ENCODE measurements at regions of chr3 and their contacts with region 1.

Region 1: DNA sequence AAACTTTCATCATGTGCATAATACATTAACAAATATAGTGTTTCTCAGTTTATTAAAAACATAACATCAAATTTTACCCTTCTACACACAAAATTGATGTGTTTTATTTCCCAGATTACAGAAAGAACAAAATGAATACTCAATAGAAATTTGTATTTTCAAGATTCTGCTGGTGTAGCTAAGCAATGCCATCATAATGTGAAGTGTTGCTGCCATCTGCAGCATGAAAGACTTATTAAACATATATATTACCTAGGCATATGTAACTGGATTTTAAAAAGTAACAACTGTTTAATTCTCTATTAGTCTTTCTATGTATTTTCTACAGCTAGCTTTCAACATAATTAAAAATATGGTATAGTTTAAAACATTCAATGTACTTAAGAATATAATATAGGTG is 27.5 kb downstream of the PLSCR5 start:
- DNase-seq: peak in 1 of 2 donors; percentile 72
- ATAC-seq: peak in 2 of 3 donors; percentile 49 to 57
- H3K4me3 ChIP-seq: no peak overlapping the region
- H3K4me3 Mint-ChIP-seq: no peak overlapping the region
- H3K27ac ChIP-seq: no peak overlapping the region
- H3K27ac Mint-ChIP-seq: no peak overlapping the region
- H3K4me1 ChIP-seq: no peaks in the 10 kb centered on the region
- H3K4me1 Mint-ChIP-seq: no peaks in the 10 kb centered on the region
- H3K27me3 ChIP-seq: no peaks in the 10 kb centered on the region
- H3K27me3 Mint-ChIP-seq: peaks cover 0 to 5% of the 10 kb centered on the region in 2 donors
- CTCF ChIP-seq: peak; percentile 80

Region 2: DNA sequence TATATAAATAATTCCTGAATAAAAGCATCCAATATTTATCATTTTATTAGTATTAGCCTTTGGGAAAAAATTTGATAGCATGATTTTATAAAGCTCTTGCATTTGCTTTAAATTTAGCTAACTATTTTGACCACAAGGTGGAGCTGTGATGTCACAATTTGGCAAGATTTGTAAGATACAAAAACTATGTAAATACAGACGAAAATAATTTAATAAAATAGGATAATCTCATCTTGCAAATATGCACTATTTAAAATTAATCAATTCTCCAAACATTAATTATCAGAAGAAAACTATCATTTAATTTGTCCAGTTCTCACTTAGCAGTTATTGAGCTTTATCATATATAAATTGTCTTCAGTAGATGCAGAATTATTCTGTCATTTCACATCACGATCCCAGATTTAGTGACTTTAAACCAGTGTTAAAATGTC is 512.1 kb before region 1 on chr3:
- intact Hi-C with region 1: loop called (anchors 10 kb)
- DNase-seq: peak in 1 of 2 donors; percentile 27
- ATAC-seq: no peak
- H3K4me3 ChIP-seq: no peak overlapping the region
- H3K4me3 Mint-ChIP-seq: no peak overlapping the region
- H3K27ac ChIP-seq: no peak overlapping the region
- H3K27ac Mint-ChIP-seq: no peak overlapping the region
- H3K4me1 ChIP-seq: no peaks in the 10 kb centered on the region
- H3K4me1 Mint-ChIP-seq: no peaks in the 10 kb centered on the region
- H3K27me3 ChIP-seq: no peaks in the 10 kb centered on the region
- H3K27me3 Mint-ChIP-seq: no peaks in the 10 kb centered on the region
- CTCF ChIP-seq: peak; percentile 41

Region 3: GRCh38 chr3:146189519-146190173 is 388.0 kb before region 1 on chr3:
- intact Hi-C with region 1: loop called (anchors 1 kb)
- DNase-seq: peak in 1 of 2 donors; percentile 51
- ATAC-seq: peak; percentile 61 to 68 (median 64)
- H3K4me3 ChIP-seq: no peak overlapping the region
- H3K4me3 Mint-ChIP-seq: no peak overlapping the region
- H3K27ac ChIP-seq: no peak overlapping the region
- H3K27ac Mint-ChIP-seq: no peak overlapping the region
- H3K4me1 ChIP-seq: no peaks in the 10 kb centered on the region
- H3K4me1 Mint-ChIP-seq: peaks cover 0 to 5% of the 10 kb centered on the region in 2 donors
- H3K27me3 ChIP-seq: no peaks in the 10 kb centered on the region
- H3K27me3 Mint-ChIP-seq: peaks cover 0 to 2% of the 10 kb centered on the region in 2 donors
- CTCF ChIP-seq: peak; percentile 71

Region 4: DNA sequence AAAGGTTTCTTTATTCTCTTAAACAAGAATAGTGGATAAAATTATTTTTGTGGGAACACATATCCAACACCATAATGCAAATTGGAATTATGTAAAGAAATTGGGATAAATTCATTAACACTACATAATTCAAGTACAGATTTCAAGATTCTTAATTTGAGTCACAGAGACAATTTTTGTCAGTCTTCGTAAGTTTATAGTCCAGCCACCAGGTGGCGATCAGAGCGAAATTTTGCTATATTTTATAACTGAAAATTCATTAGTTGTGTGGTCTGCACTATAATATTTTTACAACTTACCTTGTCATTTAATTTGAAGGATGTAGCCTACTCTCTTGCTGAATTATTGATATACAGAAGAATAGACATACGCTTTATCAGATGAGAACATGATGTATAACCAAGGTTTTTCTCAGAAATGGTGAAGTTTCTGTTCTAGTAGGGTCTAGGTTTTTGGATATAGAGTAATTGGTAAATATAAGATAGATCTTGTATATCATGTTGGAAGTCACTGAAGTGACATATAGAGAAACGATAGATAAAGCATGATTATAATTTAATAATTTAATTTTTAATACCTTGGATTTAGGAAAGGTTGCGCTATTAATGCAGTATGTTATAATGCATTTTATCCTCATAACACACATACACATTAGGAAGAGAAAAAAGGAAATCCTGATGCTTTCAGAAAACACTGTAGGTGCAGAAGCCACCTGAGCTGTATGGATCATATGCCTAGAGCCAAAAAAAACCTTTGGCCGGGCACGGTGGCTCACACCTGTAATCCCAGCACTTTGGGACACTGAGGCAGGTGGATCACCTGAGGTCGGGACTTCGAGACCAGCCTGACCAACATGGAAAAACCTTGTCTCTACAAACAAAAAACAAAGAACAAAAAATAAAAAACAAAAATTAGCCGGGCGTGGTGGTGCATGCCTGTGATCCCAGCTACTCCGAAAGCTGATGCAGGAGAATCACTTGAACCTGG is 358.5 kb before region 1 on chr3:
- intact Hi-C with region 1: loop called (anchors 1 kb)
- DNase-seq: peak in 1 of 2 donors; percentile 63
- ATAC-seq: no peak
- H3K4me3 ChIP-seq: no peak overlapping the region
- H3K4me3 Mint-ChIP-seq: no peak overlapping the region
- H3K27ac ChIP-seq: no peak overlapping the region
- H3K27ac Mint-ChIP-seq: no peak overlapping the region
- H3K4me1 ChIP-seq: no peaks in the 10 kb centered on the region
- H3K4me1 Mint-ChIP-seq: no peaks in the 10 kb centered on the region
- H3K27me3 ChIP-seq: no peaks in the 10 kb centered on the region
- H3K27me3 Mint-ChIP-seq: no peaks in the 10 kb centered on the region
- CTCF ChIP-seq: peak; percentile 72

Measured in natural killer cell (primary cell).